Activated CD4-positive, alpha-beta T cell treated with anti-CD3 and anti-CD28 coated beads, Interleukin-2, amount 10 ng/mL, durations not matched to agents 24 days and 14 days (primary cell): ENCODE measurements at regions of chr17 and their contacts with region 1.

Region 1: GRCh38 chr17:67431249-67432048 is 54.4 kb downstream of the PITPNC1 start:
- DNase-seq: peak; percentile 66
- H3K4me3 Mint-ChIP-seq: peak overlapping the region; percentile 74
- H3K27ac Mint-ChIP-seq: peak overlapping the region; percentile 93
- H3K4me1 Mint-ChIP-seq: peaks cover 55% of the 10 kb centered on the region
- H3K27me3 Mint-ChIP-seq: no peaks in the 10 kb centered on the region

Region 2: GRCh38 chr17:67400193-67400592 is 31.3 kb before region 1 on chr17:
- intact Hi-C with region 1: loop called (anchors 2 kb)
- DNase-seq: no peak
- H3K4me3 Mint-ChIP-seq: peak overlapping the region; percentile 76
- H3K27ac Mint-ChIP-seq: peak overlapping the region; percentile 70
- H3K4me1 Mint-ChIP-seq: peaks cover 43% of the 10 kb centered on the region
- H3K27me3 Mint-ChIP-seq: no peaks in the 10 kb centered on the region

Region 3: GRCh38 chr17:67602956-67603355 is 171.5 kb after region 1 on chr17:
- intact Hi-C with region 1: no loop called
- DNase-seq: peak; percentile 86
- H3K4me3 Mint-ChIP-seq: no peak overlapping the region
- H3K27ac Mint-ChIP-seq: no peak overlapping the region
- H3K4me1 Mint-ChIP-seq: peaks cover 6% of the 10 kb centered on the region
- H3K27me3 Mint-ChIP-seq: no peaks in the 10 kb centered on the region